PC-3 (cell line): ENCODE measurements at regions of chr6 and their contacts with region 1.

Region 1: DNA sequence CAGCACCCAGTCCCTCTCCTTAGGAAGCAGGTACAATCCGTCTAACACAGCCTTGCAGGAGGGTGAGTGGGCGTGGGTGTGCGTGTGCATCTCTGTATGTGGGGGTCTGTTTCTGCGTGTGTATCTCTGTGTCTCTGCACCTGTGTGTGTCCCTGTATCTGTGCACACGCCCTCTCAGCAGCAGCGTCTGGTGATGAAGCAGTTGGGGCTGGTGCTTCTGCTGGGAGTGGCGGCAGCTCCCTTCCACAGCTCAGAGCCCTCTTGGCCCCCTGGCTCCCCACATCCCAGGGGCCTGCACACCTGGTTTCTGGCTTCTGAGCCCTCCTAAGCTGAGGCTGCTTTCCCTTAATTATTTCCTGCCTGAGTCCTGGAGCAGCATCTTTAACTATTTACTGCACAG is 49.5 kb upstream of the CCDC167 start:
- DNase-seq: no peak
- ATAC-seq: no peak
- H3K4me3 ChIP-seq: no peak overlapping the region
- H3K27ac ChIP-seq: no peak overlapping the region
- H3K4me1 ChIP-seq: peaks cover 47% of the 10 kb centered on the region
- H3K27me3 ChIP-seq: no peaks in the 10 kb centered on the region
- CTCF ChIP-seq: no peak

Region 2: GRCh38 chr6:37489660-37490361 is 59.3 kb before region 1 on chr6:
- CTCF ChIA-PET with region 1: no interaction called
- POLR2A ChIA-PET with region 1: interaction called, 13 read pairs
- intact Hi-C with region 1: no loop called
- DNase-seq: no peak
- ATAC-seq: no peak
- H3K4me3 ChIP-seq: no peak overlapping the region
- H3K27ac ChIP-seq: no peak overlapping the region
- H3K4me1 ChIP-seq: no peaks in the 10 kb centered on the region
- H3K27me3 ChIP-seq: no peaks in the 10 kb centered on the region
- CTCF ChIP-seq: peak; percentile 37; the same call in 1 of the 2 replicates